Calu3 (cell line): ENCODE measurements at regions of chr10 and their contacts with region 1.

Region 1: DNA sequence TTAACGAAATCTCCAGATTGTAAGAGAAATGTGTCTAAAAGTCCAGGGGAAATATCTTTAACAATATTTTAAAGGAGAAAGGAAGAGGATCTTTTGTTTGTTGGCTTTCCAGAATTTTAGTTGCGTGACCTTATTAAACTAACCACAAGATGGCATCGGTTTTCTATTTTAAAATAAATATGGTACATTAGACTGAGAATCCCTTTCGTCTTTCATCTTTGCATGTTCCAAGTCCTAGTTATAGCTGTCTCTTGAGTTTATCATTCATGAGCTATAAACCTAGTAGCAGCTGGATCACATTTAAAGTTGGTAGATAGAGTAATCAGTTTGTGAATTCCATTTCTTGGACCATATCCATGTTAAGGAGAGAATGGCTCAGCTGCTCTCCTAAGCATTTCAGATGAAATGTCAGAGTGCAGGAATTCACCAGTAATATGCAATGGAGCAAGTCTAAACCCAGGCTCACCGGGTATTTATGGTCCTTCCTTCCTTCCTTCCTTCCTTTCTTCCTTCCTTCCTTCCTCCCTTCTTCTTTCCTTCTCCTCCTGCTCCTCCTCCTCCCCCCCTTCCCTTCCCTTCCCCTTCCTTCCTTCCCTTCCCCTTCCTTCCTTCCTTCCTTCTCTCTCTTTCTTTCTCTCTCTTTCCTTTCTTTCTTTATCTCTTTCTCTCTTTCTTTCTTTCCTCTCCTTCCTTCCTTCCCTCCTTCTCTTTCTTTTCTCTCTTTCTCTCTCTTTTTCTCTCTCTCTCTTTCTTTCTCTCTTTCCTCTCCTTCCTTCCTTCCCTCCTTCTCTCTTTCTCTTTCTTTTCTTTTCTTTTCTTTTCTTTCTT is 57.8 kb upstream of the RAB18 start:
- DNase-seq: no peak
- H3K4me3 Mint-ChIP-seq: no peak overlapping the region
- H3K27ac Mint-ChIP-seq: no peak overlapping the region
- H3K4me1 Mint-ChIP-seq: peaks cover 13% of the 10 kb centered on the region
- H3K27me3 Mint-ChIP-seq: no peaks in the 10 kb centered on the region
- CTCF ChIP-seq: no peak

Region 2: GRCh38 chr10:27369880-27370279 is 76.4 kb before region 1 on chr10:
- CTCF ChIA-PET with region 1: no interaction called
- intact Hi-C with region 1: loop called (anchors 5 kb)
- DNase-seq: no peak
- H3K4me3 Mint-ChIP-seq: no peak overlapping the region
- H3K27ac Mint-ChIP-seq: no peak overlapping the region
- H3K4me1 Mint-ChIP-seq: peaks cover 9% of the 10 kb centered on the region
- H3K27me3 Mint-ChIP-seq: no peaks in the 10 kb centered on the region
- CTCF ChIP-seq: peak; percentile 17

Region 3: DNA sequence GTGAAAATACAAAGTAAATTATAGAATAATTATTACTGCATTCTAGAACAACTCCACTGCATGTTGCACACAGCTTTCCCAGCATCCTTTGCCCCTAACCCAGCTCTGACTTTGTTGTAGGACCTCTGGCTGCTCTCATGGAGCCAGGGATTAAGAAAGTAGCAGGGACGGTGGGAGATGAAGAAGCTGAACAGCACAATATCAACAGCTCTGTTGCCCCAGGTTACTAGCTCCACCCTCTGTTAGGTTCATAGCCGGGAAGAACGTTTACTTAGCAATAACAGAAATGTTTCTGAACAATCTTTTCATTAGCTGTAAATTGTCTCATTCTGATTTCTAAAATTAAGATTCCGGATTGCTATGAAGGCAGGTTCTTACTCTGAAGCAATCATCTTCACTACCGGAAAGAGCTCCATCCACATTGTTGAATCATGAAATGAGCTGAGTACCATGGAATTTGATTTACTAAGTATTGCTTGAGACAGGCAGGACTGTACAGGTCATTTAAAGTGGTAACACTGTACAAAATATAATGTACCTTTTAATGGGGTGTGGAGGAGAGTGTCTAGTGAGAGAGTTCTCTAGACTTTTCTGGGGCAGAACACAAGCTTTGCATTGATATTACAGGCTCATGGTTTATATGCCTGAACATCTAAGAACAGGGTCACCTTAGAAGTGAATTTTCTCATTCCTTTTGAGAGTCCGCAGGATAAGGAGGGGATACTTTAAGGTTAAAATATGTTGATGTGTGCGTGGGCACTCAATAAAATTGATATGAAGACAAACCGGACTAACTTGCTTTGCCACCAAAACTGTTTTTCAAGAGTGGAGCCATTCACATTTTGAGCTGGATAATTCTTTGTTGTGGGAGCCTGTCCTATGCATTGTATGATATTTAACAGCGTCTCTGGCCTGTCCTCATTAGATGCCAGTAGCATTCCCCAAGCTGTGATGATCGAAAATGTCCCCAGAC is 37.0 kb after region 1 on chr10:
- CTCF ChIA-PET with region 1: interaction called, 3 read pairs
- intact Hi-C with region 1: loop called (anchors 1 kb)
- DNase-seq: peak; percentile 17
- H3K4me3 Mint-ChIP-seq: peak overlapping the region; percentile 62
- H3K27ac Mint-ChIP-seq: peak overlapping the region; percentile 93
- H3K4me1 Mint-ChIP-seq: peaks cover 9% of the 10 kb centered on the region
- H3K27me3 Mint-ChIP-seq: no peaks in the 10 kb centered on the region
- CTCF ChIP-seq: no peak

Region 4: GRCh38 chr10:27661514-27662286 is 215.4 kb after region 1 on chr10:
- CTCF ChIA-PET with region 1: no interaction called
- intact Hi-C with region 1: loop called (anchors 2 kb)
- DNase-seq: no peak
- H3K4me3 Mint-ChIP-seq: no peak overlapping the region
- H3K27ac Mint-ChIP-seq: peak overlapping the region; percentile 27
- H3K4me1 Mint-ChIP-seq: no peaks in the 10 kb centered on the region
- H3K27me3 Mint-ChIP-seq: peaks cover 33% of the 10 kb centered on the region
- CTCF ChIP-seq: no peak